Activated CD4-positive, alpha-beta T cell treated with anti-CD3 and anti-CD28 coated beads for 36 hours (primary cell): ENCODE measurements at regions of chr12 and their contacts with region 1.

Region 1: DNA sequence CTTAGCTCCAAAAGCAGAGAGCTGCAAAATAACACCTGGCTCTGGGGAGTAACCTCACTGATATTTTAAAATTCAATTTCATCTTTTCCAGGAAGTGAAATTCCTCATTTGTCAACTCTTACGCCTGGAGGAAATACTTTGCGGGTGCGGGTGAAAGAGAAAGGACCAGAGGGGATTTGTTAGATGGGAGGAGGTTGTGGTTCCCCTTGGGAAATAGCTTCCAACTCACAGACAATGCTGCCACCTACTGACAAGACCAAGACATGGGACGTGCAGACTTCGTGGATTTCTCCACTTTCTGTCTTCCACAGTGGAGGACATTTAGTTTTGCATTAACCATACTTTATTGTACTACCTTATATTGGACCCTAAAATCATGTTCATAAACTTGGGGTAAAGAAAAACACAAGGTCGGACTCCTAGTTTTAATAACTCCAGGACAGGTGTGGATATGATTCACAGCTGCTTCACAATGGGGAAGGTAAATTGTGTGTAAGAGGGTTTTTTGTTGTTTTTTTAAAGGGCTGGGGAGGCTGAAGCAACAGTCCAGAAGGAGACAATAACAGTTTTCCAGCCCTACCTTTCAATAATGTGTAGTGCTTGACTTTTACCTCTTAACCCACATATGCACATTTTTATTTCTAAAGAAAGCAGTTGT is 10.8 kb downstream of the FBXL14 start:
- DNase-seq: peak; percentile 78
- ATAC-seq: peak; percentile 74
- H3K4me3 Mint-ChIP-seq: peak overlapping the region; percentile 20
- H3K27ac Mint-ChIP-seq: no peak overlapping the region
- H3K4me1 Mint-ChIP-seq: peaks cover 19% of the 10 kb centered on the region
- H3K27me3 Mint-ChIP-seq: no peaks in the 10 kb centered on the region

Region 2: GRCh38 chr12:569803-570434 is 1013.6 kb before region 1 on chr12:
- CTCF ChIA-PET with region 1: interaction called, 4 read pairs
- POLR2A ChIA-PET with region 1: no interaction called
- intact Hi-C with region 1: loop called in 1 of 2 experiments (anchors 10 kb)
- DNase-seq: peak; percentile 94
- ATAC-seq: peak; percentile 89
- H3K4me3 Mint-ChIP-seq: peak overlapping the region; percentile 74
- H3K27ac Mint-ChIP-seq: peak overlapping the region; percentile 85
- H3K4me1 Mint-ChIP-seq: peaks cover 65% of the 10 kb centered on the region
- H3K27me3 Mint-ChIP-seq: no peaks in the 10 kb centered on the region

Region 3: GRCh38 chr12:1108276-1108675 is 475.3 kb before region 1 on chr12:
- CTCF ChIA-PET with region 1: interaction called, 16 read pairs
- POLR2A ChIA-PET with region 1: no interaction called
- intact Hi-C with region 1: no loop called
- DNase-seq: no peak
- ATAC-seq: peak; percentile 92
- H3K4me3 Mint-ChIP-seq: no peak overlapping the region
- H3K27ac Mint-ChIP-seq: no peak overlapping the region
- H3K4me1 Mint-ChIP-seq: peaks cover 25% of the 10 kb centered on the region
- H3K27me3 Mint-ChIP-seq: no peaks in the 10 kb centered on the region

Region 4: DNA sequence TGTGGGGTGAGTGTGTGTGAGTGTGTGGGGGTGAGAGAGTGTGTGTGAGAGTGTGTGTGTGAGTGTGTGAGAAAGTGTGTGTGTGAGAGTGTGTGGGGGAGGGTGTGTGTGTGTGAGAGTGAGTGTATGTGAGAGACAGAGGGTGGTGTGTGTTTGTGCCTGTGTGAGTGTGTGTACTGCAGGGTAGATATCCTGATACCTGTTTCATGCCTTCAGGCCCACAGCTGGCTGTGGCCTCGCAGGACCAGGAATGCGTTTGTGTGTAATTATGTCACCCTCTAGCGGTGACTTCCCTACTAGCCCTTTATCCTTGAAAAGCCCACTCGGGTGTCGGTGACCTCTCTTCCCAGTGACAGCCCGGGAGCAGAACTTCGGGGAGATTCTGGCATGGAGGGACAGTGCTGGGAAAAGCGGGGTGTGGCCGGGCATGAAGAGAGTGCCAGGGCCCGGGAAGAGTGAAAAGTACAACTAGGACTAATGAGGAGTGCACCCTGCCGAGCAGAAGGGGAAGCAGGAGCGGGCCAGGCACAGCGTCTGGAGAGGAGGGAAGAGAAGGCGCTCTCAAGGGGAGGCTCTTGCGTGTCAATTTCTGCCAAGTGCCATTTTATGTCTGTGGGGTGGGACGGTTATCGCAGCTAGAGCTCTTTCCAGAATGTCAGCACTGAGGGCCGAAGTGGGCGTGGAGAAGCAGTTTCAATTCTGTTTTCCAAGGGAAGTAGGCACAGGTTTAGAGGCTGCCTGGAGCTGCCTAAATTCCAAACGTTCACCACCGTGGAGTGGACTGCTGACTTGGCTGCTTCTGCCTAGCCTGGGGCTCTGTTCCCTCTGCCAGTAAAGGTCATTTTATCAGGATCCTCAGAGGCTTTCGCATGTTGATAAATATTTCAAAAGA is 21.8 kb after region 1 on chr12:
- CTCF ChIA-PET with region 1: interaction called, 28 read pairs
- POLR2A ChIA-PET with region 1: no interaction called
- intact Hi-C with region 1: loop called in 1 of 2 experiments (anchors 1 kb)
- DNase-seq: peak; percentile 70
- ATAC-seq: peak; percentile 60
- H3K4me3 Mint-ChIP-seq: peak overlapping the region; percentile 68
- H3K27ac Mint-ChIP-seq: peak overlapping the region; percentile 72
- H3K4me1 Mint-ChIP-seq: peaks cover 44% of the 10 kb centered on the region
- H3K27me3 Mint-ChIP-seq: no peaks in the 10 kb centered on the region

Region 5: DNA sequence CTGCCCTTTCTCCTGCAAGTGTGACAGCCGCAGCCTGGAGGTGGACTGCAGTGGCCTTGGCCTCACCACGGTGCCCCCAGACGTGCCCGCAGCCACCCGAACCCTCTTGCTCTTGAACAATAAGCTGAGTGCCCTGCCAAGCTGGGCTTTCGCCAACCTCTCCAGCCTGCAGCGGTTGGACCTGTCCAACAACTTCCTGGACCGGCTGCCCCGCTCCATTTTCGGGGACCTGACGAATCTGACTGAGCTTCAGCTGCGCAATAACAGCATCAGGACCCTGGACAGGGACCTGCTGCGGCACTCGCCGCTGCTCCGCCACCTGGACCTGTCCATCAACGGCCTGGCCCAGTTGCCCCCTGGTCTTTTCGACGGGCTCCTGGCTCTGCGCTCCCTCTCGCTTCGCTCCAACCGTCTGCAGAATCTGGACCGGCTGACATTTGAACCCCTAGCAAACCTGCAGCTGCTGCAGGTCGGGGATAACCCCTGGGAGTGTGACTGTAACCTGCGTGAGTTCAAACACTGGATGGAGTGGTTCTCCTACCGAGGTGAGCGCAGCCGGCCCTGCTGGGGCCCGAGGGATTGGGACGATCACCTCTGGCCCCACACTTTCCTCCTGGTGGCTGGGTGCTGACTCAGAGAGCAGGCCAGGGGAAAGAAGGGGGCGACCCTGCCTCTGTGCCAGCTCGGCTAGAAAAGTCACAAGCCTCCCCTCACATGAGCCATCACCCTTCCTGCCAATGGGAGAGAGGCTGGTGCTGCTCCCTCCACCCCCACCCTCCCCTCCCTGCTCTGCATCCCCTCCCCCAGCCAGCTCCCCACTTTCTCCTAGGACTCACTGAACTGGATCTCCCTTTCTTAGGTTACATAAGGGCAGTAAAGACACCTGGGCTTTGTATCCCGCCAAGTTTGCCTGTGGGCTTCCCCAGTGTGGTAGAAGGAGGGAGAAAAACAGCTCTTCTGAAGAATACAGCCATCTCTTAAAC is 247.7 kb after region 1 on chr12:
- CTCF ChIA-PET with region 1: no interaction called
- POLR2A ChIA-PET with region 1: no interaction called
- intact Hi-C with region 1: no loop called
- DNase-seq: peak; percentile 52
- ATAC-seq: peak; percentile 49
- H3K4me3 Mint-ChIP-seq: no peak overlapping the region
- H3K27ac Mint-ChIP-seq: no peak overlapping the region
- H3K4me1 Mint-ChIP-seq: no peaks in the 10 kb centered on the region
- H3K27me3 Mint-ChIP-seq: peaks cover 20% of the 10 kb centered on the region

Region 6: GRCh38 chr12:1880153-1880845 is 296.7 kb after region 1 on chr12:
- CTCF ChIA-PET with region 1: no interaction called
- POLR2A ChIA-PET with region 1: no interaction called
- intact Hi-C with region 1: no loop called
- DNase-seq: no peak
- ATAC-seq: no peak
- H3K4me3 Mint-ChIP-seq: no peak overlapping the region
- H3K27ac Mint-ChIP-seq: no peak overlapping the region
- H3K4me1 Mint-ChIP-seq: no peaks in the 10 kb centered on the region
- H3K27me3 Mint-ChIP-seq: peaks cover 1% of the 10 kb centered on the region